ENCODE measurements at regions of chr4 and their contacts with region 1.

Region 1: GRCh38 chr4:89657931-89658700 is 178.8 kb downstream of the SNCA start:
- DNase-seq: no peak
- H3K4me3 ChIP-seq: no peak overlapping the region
- H3K27ac ChIP-seq: no peak overlapping the region
- H3K4me1 ChIP-seq: no peaks in the 10 kb centered on the region
- H3K27me3 ChIP-seq: peaks cover 5% of the 10 kb centered on the region
- CTCF ChIP-seq: peak; percentile 33 to 58 (median 53)
- POLR2A ChIP-seq: no peak

Region 2: DNA sequence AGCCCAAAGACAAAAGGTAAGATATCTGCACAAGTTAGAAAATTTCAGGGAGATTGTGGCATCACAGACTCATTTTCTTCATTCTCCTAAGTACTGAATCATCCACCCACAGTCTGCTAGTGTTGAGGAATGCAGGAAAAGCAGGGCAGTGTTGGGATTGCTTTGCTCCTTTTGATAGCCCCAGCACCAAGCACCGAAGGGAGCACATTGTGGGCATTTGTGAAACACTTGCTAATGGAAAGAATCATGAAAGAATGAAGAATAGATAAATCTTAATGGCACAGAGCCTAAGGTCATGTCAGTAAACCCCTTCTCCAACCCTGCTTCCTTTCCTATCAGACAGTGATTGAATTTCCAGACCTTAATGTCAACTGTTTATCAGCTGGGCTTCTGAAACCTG is 247.4 kb before region 1 on chr4:
- intact Hi-C with region 1: no loop called
- DNase-seq: no peak
- H3K4me3 ChIP-seq: no peak overlapping the region
- H3K27ac ChIP-seq: no peak overlapping the region
- H3K4me1 ChIP-seq: no peaks in the 10 kb centered on the region
- H3K27me3 ChIP-seq: no peaks in the 10 kb centered on the region
- CTCF ChIP-seq: no peak
- POLR2A ChIP-seq: no peak

Region 3: DNA sequence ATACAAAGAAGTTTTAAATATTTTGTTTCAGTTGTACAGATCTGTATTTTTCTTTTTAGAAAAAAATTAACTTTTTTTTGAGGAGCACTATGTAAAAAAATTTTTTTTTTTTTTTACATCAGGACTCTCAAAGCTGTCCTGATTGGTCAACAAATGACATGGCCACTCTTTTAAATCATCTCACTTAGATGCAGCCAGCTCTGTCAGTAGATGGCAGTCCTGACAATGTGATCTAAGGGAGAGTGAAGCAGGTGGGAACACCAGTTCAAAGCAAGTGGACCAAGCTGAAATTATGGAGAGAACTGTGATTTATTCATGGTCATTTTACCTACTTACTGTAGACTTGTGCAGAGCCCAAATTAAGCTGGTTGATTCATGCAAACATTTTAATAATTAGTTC is 175.9 kb before region 1 on chr4:
- intact Hi-C with region 1: loop called in 1 of 2 experiments (anchors 10 kb)
- DNase-seq: peak in 1 of 7 donors; percentile 18
- H3K4me3 ChIP-seq: no peak overlapping the region
- H3K27ac ChIP-seq: no peak overlapping the region
- H3K4me1 ChIP-seq: no peaks in the 10 kb centered on the region
- H3K27me3 ChIP-seq: no peaks in the 10 kb centered on the region
- CTCF ChIP-seq: peak in 2 of 6 experiments; percentile 24 to 32
- POLR2A ChIP-seq: no peak

Region 4: GRCh38 chr4:89598602-89599001 is 59.5 kb before region 1 on chr4:
- intact Hi-C with region 1: no loop called
- DNase-seq: no peak
- H3K4me3 ChIP-seq: no peak overlapping the region
- H3K27ac ChIP-seq: no peak overlapping the region
- H3K4me1 ChIP-seq: no peaks in the 10 kb centered on the region
- H3K27me3 ChIP-seq: no peaks in the 10 kb centered on the region
- CTCF ChIP-seq: peak in 4 of 6 experiments; percentile 8 to 26 (median 14)
- POLR2A ChIP-seq: no peak

Region 5: DNA sequence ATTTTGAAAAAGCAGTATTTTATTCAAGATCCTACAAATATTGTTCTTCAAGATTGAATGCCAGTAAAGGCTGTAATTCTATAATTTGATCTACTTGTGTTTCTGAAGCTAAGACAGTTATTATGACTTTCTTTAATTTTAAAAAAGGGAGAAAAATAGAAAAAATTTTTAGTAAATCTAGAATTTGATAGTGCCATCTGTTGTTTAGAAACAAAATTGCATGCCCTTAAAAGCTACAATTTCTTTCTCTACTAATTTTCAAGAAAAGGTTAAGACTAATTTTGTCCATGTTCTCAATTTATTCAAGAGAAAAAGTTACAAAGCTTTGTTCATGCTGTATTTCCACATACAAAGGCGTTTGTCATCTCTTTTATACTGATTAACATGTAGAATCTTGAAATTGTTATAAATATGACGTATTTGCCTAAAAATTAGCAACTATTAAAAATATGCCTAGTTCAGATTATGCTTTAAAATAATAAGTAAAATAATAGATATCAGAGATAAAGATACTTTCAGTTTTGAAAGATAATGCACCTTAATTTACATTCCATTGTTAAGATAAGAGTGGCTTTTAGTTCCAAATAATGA is 211.0 kb after region 1 on chr4:
- intact Hi-C with region 1: loop called in 1 of 2 experiments (anchors 10 kb)
- DNase-seq: no peak
- H3K4me3 ChIP-seq: no peak overlapping the region
- H3K27ac ChIP-seq: no peak overlapping the region
- H3K4me1 ChIP-seq: no peaks in the 10 kb centered on the region
- H3K27me3 ChIP-seq: peaks cover 3% of the 10 kb centered on the region
- CTCF ChIP-seq: peak; percentile 22 to 71 (median 55)
- POLR2A ChIP-seq: no peak

Region 6: DNA sequence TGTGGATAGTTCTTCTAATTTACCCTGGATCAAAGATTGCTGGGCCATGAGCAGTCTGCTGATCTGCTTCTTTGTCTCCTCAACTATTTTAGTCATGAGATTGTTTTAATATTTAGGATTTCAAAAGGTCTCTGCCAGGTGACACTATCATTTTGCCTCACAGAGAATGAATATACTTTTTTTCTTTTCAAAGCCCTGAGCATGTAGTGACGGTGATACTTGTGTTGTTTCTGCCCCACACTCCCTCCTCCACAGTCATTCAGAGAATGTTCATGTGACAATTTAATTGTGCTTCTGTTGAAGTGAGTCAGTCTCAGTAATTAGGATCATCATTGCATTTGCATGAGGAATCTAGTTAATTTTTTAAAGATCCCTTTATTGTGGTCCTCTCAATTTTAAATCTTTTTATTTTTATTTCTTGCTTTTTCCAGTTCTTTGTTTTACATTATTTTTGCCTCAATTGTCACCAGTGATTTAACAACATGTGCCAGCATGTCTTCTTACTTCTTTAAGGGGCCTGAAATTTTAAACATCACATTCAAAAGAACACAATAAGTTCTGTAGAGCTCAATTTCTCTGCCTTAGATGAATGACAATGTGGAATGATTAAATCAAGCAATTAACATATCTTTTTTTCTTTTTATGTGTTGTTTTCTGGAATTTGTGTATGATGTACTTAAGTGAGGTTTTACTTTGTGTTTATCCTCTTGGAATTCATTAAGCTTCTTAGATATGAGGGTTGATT is 248.8 kb after region 1 on chr4:
- intact Hi-C with region 1: loop called in 1 of 2 experiments (anchors 10 kb)
- DNase-seq: no peak
- H3K4me3 ChIP-seq: no peak overlapping the region
- H3K27ac ChIP-seq: no peak overlapping the region
- H3K4me1 ChIP-seq: no peaks in the 10 kb centered on the region
- H3K27me3 ChIP-seq: peaks cover 17% of the 10 kb centered on the region
- CTCF ChIP-seq: no peak
- POLR2A ChIP-seq: no peak

Measured in adrenal gland (tissue), 19 donors.